ENCODE measurements at regions of chr16 and their contacts with region 1.

Region 1: DNA sequence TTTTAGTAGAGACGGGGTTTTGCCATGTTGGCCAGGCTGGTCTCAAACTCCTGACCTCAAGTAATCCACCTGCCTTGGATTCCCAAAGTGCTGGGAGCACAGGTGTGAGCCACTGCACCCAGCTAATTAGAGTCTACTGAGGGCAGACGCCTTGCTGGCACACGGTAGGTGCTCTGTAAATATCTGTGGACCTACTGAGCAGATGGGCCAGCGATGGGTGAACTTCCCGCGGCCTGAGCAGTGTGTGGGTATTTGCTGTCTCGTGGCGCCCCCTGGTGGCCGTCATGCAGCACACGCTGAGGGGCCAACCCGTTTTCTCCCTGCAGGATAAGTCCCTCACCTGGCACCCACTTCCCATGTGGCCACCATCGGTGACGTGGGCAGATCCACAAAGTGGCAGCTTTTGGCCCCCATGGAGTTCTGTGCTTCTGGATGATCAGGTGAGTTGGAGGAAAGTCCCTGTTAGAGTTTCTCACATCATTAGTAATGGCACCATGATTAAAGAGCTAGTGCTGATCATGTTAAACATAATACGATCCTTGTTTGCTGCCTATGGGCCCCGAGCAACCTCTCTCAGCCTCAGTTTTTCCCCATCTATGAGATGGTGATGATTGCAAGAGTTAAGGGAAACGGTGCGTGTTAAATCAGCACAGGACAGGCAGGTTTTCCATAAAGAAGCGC is 40.7 kb downstream of the ZDHHC7 start:
- DNase-seq: peak; percentile 82
- ATAC-seq: peak; percentile 97
- H3K4me3 Mint-ChIP-seq: no peak overlapping the region
- H3K27ac Mint-ChIP-seq: no peak overlapping the region
- H3K4me1 Mint-ChIP-seq: no peaks in the 10 kb centered on the region
- H3K27me3 Mint-ChIP-seq: peaks cover 2% of the 10 kb centered on the region

Region 2: GRCh38 chr16:84925092-84925772 is 45.4 kb before region 1 on chr16:
- CTCF ChIA-PET with region 1: interaction called, 32 read pairs
- DNase-seq: peak; percentile 74
- ATAC-seq: peak; percentile 64
- H3K4me3 Mint-ChIP-seq: no peak overlapping the region
- H3K27ac Mint-ChIP-seq: no peak overlapping the region
- H3K4me1 Mint-ChIP-seq: no peaks in the 10 kb centered on the region
- H3K27me3 Mint-ChIP-seq: no peaks in the 10 kb centered on the region

Region 3: GRCh38 chr16:84940670-84941551 is 29.7 kb before region 1 on chr16:
- CTCF ChIA-PET with region 1: no interaction called
- DNase-seq: no peak
- ATAC-seq: no peak
- H3K4me3 Mint-ChIP-seq: no peak overlapping the region
- H3K27ac Mint-ChIP-seq: no peak overlapping the region
- H3K4me1 Mint-ChIP-seq: no peaks in the 10 kb centered on the region
- H3K27me3 Mint-ChIP-seq: no peaks in the 10 kb centered on the region

Region 4: GRCh38 chr16:84982434-84982833 is 11.8 kb after region 1 on chr16:
- CTCF ChIA-PET with region 1: interaction called, 10 read pairs
- DNase-seq: no peak
- ATAC-seq: no peak
- H3K4me3 Mint-ChIP-seq: no peak overlapping the region
- H3K27ac Mint-ChIP-seq: no peak overlapping the region
- H3K4me1 Mint-ChIP-seq: no peaks in the 10 kb centered on the region
- H3K27me3 Mint-ChIP-seq: no peaks in the 10 kb centered on the region

Measured in activated CD8-positive, alpha-beta memory T cell treated with anti-CD3 and anti-CD28 coated beads, Interleukin-2, amount 10 ng/mL, durations not matched to agents 7 days and 5 days (primary cell).